Activated T-helper 1 cell treated with anti-CD3 and anti-CD28 coated beads, Interleukin-12 subunit alpha, Interleukin-12 subunit beta, Interleukin-2, Interleukin-4 antibody, amounts not matched to agents 30 ng/mL and 10 ng/mL and 1 ng/mL, durations not matched to agents 14 hours and 24 hours and 36 hours (primary cell): ENCODE measurements at regions of chr3 and their contacts with region 1.

Region 1: GRCh38 chr3:187919048-187919447 is 173.8 kb upstream of the BCL6 start:
- DNase-seq: peak; percentile 67
- H3K4me3 Mint-ChIP-seq: peak overlapping the region; percentile 62
- H3K27ac Mint-ChIP-seq: peak overlapping the region; percentile 93
- H3K4me1 Mint-ChIP-seq: peaks cover 86% of the 10 kb centered on the region
- H3K27me3 Mint-ChIP-seq: peaks cover 3% of the 10 kb centered on the region

Region 2: GRCh38 chr3:187533797-187534196 is 385.3 kb before region 1 on chr3:
- intact Hi-C with region 1: no loop called
- DNase-seq: no peak
- H3K4me3 Mint-ChIP-seq: no peak overlapping the region
- H3K27ac Mint-ChIP-seq: no peak overlapping the region
- H3K4me1 Mint-ChIP-seq: no peaks in the 10 kb centered on the region
- H3K27me3 Mint-ChIP-seq: peaks cover 10% of the 10 kb centered on the region

Region 3: GRCh38 chr3:187802928-187803259 is 116.2 kb before region 1 on chr3:
- intact Hi-C with region 1: loop called (anchors 1 kb)
- DNase-seq: peak; percentile 78
- H3K4me3 Mint-ChIP-seq: peak overlapping the region; percentile 65
- H3K27ac Mint-ChIP-seq: peak overlapping the region; percentile 90
- H3K4me1 Mint-ChIP-seq: peaks cover 96% of the 10 kb centered on the region
- H3K27me3 Mint-ChIP-seq: no peaks in the 10 kb centered on the region

Region 4: GRCh38 chr3:187974871-187975271 is 55.8 kb after region 1 on chr3:
- intact Hi-C with region 1: loop called (anchors 1 kb)
- DNase-seq: no peak
- H3K4me3 Mint-ChIP-seq: peak overlapping the region; percentile 59
- H3K27ac Mint-ChIP-seq: peak overlapping the region; percentile 94
- H3K4me1 Mint-ChIP-seq: peaks cover 62% of the 10 kb centered on the region
- H3K27me3 Mint-ChIP-seq: peaks cover 2% of the 10 kb centered on the region

Region 5: GRCh38 chr3:188284455-188285212 is 365.6 kb after region 1 on chr3:
- intact Hi-C with region 1: loop called (anchors 1 kb)
- DNase-seq: peak; percentile 26
- H3K4me3 Mint-ChIP-seq: peak overlapping the region; percentile 57
- H3K27ac Mint-ChIP-seq: peak overlapping the region; percentile 90
- H3K4me1 Mint-ChIP-seq: peaks cover 55% of the 10 kb centered on the region
- H3K27me3 Mint-ChIP-seq: peaks cover 2% of the 10 kb centered on the region

Region 6: GRCh38 chr3:188400494-188401243 is 481.6 kb after region 1 on chr3:
- intact Hi-C with region 1: loop called (anchors 2 kb)
- DNase-seq: peak; percentile 22
- H3K4me3 Mint-ChIP-seq: no peak overlapping the region
- H3K27ac Mint-ChIP-seq: peak overlapping the region; percentile 63
- H3K4me1 Mint-ChIP-seq: peaks cover 73% of the 10 kb centered on the region
- H3K27me3 Mint-ChIP-seq: peaks cover 4% of the 10 kb centered on the region

Region 7: GRCh38 chr3:188788621-188789081 is 869.6 kb after region 1 on chr3:
- intact Hi-C with region 1: loop called (anchors 1 kb)
- DNase-seq: peak; percentile 49
- H3K4me3 Mint-ChIP-seq: no peak overlapping the region
- H3K27ac Mint-ChIP-seq: no peak overlapping the region
- H3K4me1 Mint-ChIP-seq: peaks cover 6% of the 10 kb centered on the region
- H3K27me3 Mint-ChIP-seq: peaks cover 8% of the 10 kb centered on the region